ENCODE measurements at regions of chr19 and their contacts with region 1.

Region 1: DNA sequence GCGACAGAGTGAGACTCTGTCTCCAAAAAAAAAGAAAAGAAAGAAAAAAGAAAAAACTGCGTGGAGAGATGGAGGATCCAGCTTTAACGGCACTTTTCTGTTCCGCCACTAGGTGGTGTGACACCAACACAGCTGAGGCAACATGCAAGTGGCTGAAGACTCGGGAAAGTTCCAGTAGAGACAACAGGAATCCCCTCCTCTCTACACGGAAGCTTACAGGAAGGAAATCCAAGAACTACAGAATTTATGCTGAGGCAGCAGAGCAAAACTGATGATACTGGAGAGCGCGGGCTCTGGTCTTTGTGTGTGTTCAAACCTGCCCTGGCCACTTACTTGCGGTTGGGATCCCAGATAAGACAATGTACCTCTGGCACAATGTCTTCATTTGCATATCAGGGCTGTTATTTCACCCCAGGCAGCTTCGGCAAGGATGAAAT is 9.9 kb downstream of the RANBP3 start:
- DNase-seq: peak; percentile 74
- ATAC-seq: peak; percentile 82
- H3K4me3 Mint-ChIP-seq: no peak overlapping the region
- H3K27ac Mint-ChIP-seq: peak overlapping the region; percentile 58
- H3K4me1 Mint-ChIP-seq: peaks cover 67% of the 10 kb centered on the region
- H3K27me3 Mint-ChIP-seq: no peaks in the 10 kb centered on the region

Region 2: DNA sequence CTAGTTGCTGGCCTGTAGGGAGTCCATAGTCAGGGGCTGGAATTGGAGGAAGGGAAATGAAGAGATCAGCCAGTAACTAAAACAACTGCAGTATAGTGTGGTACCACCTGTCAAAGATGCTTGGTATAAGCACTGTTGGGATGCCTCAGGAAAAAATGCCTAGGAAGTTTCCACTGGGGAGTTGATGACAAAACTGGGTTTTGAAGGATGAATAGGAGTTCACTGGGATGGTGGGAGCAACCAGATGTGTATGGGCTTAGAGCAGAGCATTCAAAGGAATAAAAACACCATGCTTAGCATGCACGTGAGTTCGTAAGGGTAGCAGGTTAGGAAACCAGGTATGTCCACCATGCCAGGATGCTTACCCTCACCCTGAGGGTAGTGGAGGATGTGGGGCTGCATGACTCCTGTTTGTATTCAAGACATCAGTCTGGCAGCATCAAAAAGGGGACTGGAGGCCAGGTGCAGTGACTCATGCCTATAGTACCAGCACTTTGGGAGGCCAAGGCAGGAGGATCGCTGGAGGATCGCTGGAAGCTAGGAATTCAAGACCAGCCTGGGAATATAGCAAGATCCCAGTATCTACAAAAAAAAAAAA is 240.5 kb before region 1 on chr19:
- CTCF ChIA-PET with region 1: no interaction called
- DNase-seq: no peak
- ATAC-seq: no peak
- H3K4me3 Mint-ChIP-seq: no peak overlapping the region
- H3K27ac Mint-ChIP-seq: no peak overlapping the region
- H3K4me1 Mint-ChIP-seq: no peaks in the 10 kb centered on the region
- H3K27me3 Mint-ChIP-seq: no peaks in the 10 kb centered on the region

Region 3: DNA sequence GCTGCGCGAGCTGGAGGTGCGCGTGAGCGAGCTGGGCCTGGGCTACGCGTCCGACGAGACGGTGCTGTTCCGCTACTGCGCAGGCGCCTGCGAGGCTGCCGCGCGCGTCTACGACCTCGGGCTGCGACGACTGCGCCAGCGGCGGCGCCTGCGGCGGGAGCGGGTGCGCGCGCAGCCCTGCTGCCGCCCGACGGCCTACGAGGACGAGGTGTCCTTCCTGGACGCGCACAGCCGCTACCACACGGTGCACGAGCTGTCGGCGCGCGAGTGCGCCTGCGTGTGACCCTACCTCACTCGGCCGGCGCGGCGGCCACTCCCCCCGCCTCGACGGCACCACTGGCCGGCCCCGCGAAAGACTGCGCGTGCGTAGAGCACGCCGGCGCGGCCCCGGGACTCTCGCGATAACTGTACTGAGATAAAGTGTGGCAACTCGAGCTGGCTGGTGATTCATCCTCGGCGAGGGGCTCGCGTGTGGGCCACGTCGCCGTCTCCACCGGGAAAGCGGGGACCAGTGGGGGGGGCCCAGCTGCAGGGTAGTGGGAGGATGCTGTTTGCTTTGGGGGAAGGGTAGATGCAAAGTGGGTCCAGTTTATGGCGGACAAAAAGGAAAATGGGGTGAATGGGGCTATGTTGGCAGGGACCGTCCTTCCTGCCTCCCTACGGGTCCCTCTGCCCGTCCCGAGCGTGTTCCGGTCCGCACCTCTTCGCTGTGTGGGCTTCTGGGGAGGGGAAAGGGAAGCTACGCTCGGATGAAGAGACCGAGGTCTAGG is 139.9 kb before region 1 on chr19:
- CTCF ChIA-PET with region 1: interaction called, 11 read pairs
- DNase-seq: peak; percentile 97
- ATAC-seq: peak; percentile 83
- H3K4me3 Mint-ChIP-seq: peak overlapping the region; percentile 94
- H3K27ac Mint-ChIP-seq: peak overlapping the region; percentile 97
- H3K4me1 Mint-ChIP-seq: peaks cover 11% of the 10 kb centered on the region
- H3K27me3 Mint-ChIP-seq: no peaks in the 10 kb centered on the region

Region 4: GRCh38 chr19:5904352-5905113 is 63.5 kb before region 1 on chr19 and contains the start of gene VMAC:
- CTCF ChIA-PET with region 1: interaction called, 14 read pairs
- DNase-seq: peak; percentile 100
- ATAC-seq: peak; percentile 87
- H3K4me3 Mint-ChIP-seq: peak within 1 kb of the TSS; percentile 99
- H3K27ac Mint-ChIP-seq: peak within 1 kb of the TSS; percentile 99
- H3K4me1 Mint-ChIP-seq: peaks cover 33% of the 10 kb centered on the region
- H3K27me3 Mint-ChIP-seq: no peaks in the 10 kb centered on the region
- total RNA-seq, gene VMAC: 5.1 to 7.0 TPM

Region 5: GRCh38 chr19:5953680-5954213 is 14.3 kb before region 1 on chr19:
- CTCF ChIA-PET with region 1: interaction called, 23 read pairs
- DNase-seq: peak; percentile 55
- ATAC-seq: peak; percentile 49
- H3K4me3 Mint-ChIP-seq: peak overlapping the region; percentile 53
- H3K27ac Mint-ChIP-seq: peak overlapping the region; percentile 93
- H3K4me1 Mint-ChIP-seq: peaks cover 84% of the 10 kb centered on the region
- H3K27me3 Mint-ChIP-seq: no peaks in the 10 kb centered on the region

Region 6: GRCh38 chr19:5987077-5987818 is 19.2 kb after region 1 on chr19:
- CTCF ChIA-PET with region 1: interaction called, 49 read pairs
- DNase-seq: peak; percentile 82
- ATAC-seq: peak; percentile 22
- H3K4me3 Mint-ChIP-seq: peak overlapping the region; percentile 64
- H3K27ac Mint-ChIP-seq: peak overlapping the region; percentile 72
- H3K4me1 Mint-ChIP-seq: peaks cover 46% of the 10 kb centered on the region
- H3K27me3 Mint-ChIP-seq: no peaks in the 10 kb centered on the region

Region 7: DNA sequence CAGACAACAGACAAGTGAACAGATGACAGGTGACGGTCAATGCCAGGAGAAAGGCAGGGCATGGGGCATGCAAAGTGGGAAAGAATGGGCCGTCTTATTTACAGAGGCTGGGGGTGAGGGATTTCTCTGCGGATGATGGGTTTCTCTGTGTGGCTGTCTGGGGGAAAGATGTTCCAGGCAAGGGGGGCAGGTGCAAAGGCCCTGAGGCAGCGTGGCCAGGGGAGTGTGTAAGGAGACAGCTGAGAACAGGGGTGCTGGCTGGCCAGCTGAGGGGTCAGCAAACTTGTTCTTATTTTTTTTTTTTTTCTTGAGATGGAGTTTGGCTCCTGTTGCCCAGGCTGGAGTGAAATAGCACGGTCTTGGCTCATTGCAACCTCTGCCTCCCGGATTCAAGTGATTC is 31.7 kb after region 1 on chr19:
- CTCF ChIA-PET with region 1: no interaction called
- DNase-seq: no peak
- ATAC-seq: no peak
- H3K4me3 Mint-ChIP-seq: no peak overlapping the region
- H3K27ac Mint-ChIP-seq: no peak overlapping the region
- H3K4me1 Mint-ChIP-seq: no peaks in the 10 kb centered on the region
- H3K27me3 Mint-ChIP-seq: no peaks in the 10 kb centered on the region

Region 8: GRCh38 chr19:6021878-6022569 is 54.0 kb after region 1 on chr19:
- CTCF ChIA-PET with region 1: interaction called, 21 read pairs
- DNase-seq: peak; percentile 85
- ATAC-seq: peak; percentile 83
- H3K4me3 Mint-ChIP-seq: no peak overlapping the region
- H3K27ac Mint-ChIP-seq: no peak overlapping the region
- H3K4me1 Mint-ChIP-seq: peaks cover 1% of the 10 kb centered on the region
- H3K27me3 Mint-ChIP-seq: no peaks in the 10 kb centered on the region